ENCODE measurements at regions of chr17 and their contacts with region 1.

Region 1: DNA sequence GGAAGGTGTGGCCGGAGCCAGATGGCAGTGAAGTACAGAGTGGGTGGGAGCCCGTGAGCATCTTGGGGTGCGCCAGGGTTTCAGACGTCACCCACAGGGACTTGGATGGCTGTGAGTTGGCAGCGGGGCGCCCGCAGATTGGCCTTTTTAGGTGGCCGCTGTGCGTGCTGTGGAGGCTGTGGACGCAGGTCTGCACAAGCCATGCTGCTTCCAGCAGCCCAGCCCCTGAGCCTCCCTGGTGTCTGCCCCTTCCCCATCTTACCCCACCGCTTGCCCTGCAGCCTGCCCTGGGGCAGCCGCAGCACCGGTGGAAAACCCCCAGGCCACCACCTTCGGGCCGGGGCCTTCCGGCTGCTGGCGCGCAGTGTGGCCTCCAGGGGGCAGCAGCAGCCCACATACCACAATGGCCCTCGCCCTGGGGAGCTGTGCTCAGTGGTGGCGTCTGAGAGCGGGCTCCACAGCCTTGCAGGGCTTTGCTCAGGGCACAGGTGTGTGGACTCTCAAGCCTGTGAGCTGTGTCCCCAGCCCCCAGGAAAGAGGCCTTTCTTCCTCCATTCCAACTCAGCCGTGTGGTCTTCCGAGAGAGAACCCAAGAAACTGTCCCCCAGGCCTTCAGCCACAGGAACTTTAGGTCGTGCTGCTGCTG is 11.8 kb downstream of the ENDOV start:
- DNase-seq: peak; percentile 76
- H3K4me3 ChIP-seq: no peak overlapping the region
- H3K27ac ChIP-seq: no peak overlapping the region
- H3K4me1 ChIP-seq: no peaks in the 10 kb centered on the region
- H3K27me3 ChIP-seq: no peaks in the 10 kb centered on the region
- CTCF ChIP-seq: peak; percentile 88 to 94 (median 92)
- POLR2A ChIP-seq: no peak

Region 2: DNA sequence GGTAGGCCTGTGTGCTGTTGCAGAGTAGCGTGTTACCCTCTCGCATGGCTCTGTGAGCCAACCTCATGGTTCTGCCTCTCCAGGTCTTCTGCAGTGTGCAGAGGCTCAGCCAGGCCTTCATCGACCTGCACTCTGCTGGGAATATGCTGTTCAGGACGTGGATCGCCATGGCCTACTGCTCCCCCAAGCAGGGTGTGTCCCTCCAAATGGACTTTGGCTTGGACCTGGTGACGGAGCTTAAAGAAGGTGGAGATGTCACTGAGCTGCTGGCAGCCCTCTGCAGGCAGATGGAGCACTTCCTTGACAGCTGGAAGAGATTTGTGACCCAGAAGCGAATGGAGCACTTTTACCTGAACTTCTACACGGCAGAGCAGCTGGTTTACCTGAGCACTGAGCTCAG is 87.7 kb before region 1 on chr17:
- intact Hi-C with region 1: no loop called
- DNase-seq: no peak
- H3K4me3 ChIP-seq: no peak overlapping the region
- H3K27ac ChIP-seq: no peak overlapping the region
- H3K4me1 ChIP-seq: no peaks in the 10 kb centered on the region
- H3K27me3 ChIP-seq: no peaks in the 10 kb centered on the region
- CTCF ChIP-seq: no peak
- POLR2A ChIP-seq: no peak

Region 3: DNA sequence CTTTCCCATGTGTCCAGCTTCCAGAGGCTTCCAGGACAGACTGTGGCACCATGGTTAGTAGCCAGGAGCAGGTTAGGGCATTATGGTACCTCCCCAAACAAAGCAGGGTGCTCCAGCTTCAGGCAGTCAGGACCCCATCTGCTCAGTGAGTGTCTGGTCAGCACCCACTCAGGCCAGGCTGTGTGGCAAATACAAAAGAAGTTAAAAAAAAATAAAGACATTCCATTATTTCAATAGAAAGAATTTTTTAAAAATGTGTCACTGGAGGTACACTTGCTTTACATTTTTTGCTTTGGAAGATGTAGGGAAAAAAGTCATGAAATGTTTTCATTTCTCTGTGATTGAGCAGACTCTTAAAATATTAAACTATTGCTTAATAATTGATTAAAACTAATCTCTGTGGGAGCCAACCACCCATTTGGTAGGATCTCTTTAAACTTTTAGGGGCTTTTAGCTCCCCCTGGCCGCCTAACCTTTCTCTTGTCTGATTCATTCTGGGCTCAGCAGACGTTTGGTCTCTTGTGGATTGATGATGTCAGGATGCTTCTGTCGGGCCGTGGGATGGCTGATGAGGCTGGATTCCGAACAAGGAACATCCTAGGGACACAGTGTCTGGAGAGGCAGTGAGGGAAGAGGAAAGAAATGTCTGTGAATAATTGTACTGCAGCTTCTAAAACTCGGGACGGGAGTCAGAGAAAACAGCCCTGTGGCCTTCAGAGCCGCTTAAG is 78.0 kb after region 1 on chr17:
- intact Hi-C with region 1: no loop called
- DNase-seq: no peak
- H3K4me3 ChIP-seq: no peak overlapping the region
- H3K27ac ChIP-seq: no peak overlapping the region
- H3K4me1 ChIP-seq: peaks cover 17% of the 10 kb centered on the region
- H3K27me3 ChIP-seq: no peaks in the 10 kb centered on the region
- CTCF ChIP-seq: no peak
- POLR2A ChIP-seq: no peak

Region 4: GRCh38 chr17:80981062-80981902 is 554.5 kb after region 1 on chr17:
- intact Hi-C with region 1: loop called (anchors 5 kb)
- DNase-seq: no peak
- H3K4me3 ChIP-seq: peak overlapping the region; percentile 6 to 45
- H3K27ac ChIP-seq: no peak overlapping the region
- H3K4me1 ChIP-seq: peaks cover 12% of the 10 kb centered on the region
- H3K27me3 ChIP-seq: no peaks in the 10 kb centered on the region
- CTCF ChIP-seq: peak; percentile 73 to 89 (median 79)
- POLR2A ChIP-seq: no peak